Sigmoid colon (tissue), 7 donors: ENCODE measurements at regions of chr2 and their contacts with region 1.

Region 1: DNA sequence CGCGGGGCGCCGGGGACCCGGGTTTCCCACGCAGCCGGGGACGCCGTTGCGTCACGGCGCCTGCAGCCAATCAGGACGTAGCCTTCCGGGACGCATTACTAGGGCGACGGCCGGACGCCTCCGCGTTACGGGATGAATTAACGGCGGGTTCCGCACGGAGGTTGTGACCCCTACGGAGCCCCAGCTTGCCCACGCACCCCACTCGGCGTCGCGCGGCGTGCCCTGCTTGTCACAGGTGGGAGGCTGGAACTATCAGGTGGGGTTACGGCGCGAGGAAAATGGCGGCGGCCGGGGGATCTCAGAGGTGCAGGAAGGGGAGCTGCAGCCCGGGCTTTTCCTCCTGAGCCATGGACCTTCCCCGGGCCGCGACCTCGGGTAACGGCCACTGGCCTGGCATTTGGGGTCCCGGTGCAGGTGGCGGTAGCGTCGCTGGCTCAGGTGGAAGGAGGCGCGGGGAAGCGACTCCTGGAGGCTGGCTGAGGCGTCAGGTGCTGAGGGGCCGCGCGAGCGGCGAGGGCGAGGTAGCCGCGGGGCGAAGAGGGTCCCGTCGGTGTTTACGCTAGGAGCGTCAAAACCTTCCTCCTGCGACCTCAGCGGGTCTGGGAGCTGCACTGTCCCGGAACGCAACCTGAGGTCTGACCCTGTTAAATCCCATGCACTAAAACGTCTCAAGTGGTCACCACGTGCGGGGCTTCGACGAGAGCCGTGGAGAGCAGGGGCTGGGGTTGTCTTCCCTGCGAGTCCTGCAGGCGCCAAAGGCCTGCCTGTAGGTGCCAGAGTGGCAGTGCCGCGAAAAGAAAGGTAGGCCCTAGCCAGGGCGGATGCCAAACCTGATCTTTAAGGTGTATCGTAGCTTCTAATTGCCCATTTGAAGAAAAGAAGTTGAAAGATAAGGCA is at the start of gene LCLAT1:
- DNase-seq: peak; percentile 89
- H3K4me3 ChIP-seq: peak within 1 kb of the TSS; percentile 77 to 98 (median 86)
- H3K27ac ChIP-seq: peak within 1 kb of the TSS; percentile 76 to 87 (median 85)
- H3K4me1 ChIP-seq: peaks cover 0 to 20% (median 14%) of the 10 kb centered on the region in 4 donors
- H3K27me3 ChIP-seq: no peaks in the 10 kb centered on the region
- CTCF ChIP-seq: peak in 1 of 4 experiments; percentile 7
- EP300 ChIP-seq: no peak
- POLR2A ChIP-seq: no peak
- total RNA-seq, gene LCLAT1: 10.0 to 17.2 (median 13.4) TPM

Region 2: GRCh38 chr2:30300456-30301221 is 146.8 kb before region 1 on chr2:
- intact Hi-C with region 1: loop called (anchors 5 kb)
- DNase-seq: no peak
- H3K4me3 ChIP-seq: no peak overlapping the region
- H3K27ac ChIP-seq: peak overlapping the region; percentile 73 to 88 (median 82)
- H3K4me1 ChIP-seq: peaks cover 0 to 27% (median 24%) of the 10 kb centered on the region in 4 donors
- H3K27me3 ChIP-seq: no peaks in the 10 kb centered on the region
- CTCF ChIP-seq: no peak
- EP300 ChIP-seq: peak in 3 of 4 donors; percentile 56 to 63 (median 61)
- POLR2A ChIP-seq: no peak

Region 3: DNA sequence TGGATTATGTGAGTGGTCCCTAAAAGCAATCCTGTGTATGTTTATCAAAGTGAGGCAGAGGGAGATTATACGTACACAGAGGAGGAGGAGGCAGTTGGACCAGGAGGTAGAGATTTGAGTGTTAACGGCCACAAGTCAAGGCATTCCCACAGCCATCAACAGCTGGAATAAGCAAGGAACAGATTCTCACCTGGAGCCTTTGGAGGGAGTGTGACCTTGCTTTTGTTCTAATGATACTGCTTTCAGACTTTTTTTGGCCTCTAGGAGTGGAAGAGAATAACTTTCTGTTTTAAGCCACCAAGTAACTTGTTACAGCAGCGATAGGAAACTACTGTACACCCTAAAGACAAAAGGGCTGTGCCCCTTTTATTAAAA is 17.8 kb after region 1 on chr2:
- intact Hi-C with region 1: no loop called
- DNase-seq: no peak
- H3K4me3 ChIP-seq: peak overlapping the region in 1 of 4 donors; percentile 1
- H3K27ac ChIP-seq: peak overlapping the region; percentile 14 to 40 (median 28)
- H3K4me1 ChIP-seq: peaks cover 0 to 15% (median 6%) of the 10 kb centered on the region in 4 donors
- H3K27me3 ChIP-seq: no peaks in the 10 kb centered on the region
- CTCF ChIP-seq: no peak
- EP300 ChIP-seq: no peak
- POLR2A ChIP-seq: no peak